ENCODE measurements at regions of chr7 and their contacts with region 1.

Region 1: DNA sequence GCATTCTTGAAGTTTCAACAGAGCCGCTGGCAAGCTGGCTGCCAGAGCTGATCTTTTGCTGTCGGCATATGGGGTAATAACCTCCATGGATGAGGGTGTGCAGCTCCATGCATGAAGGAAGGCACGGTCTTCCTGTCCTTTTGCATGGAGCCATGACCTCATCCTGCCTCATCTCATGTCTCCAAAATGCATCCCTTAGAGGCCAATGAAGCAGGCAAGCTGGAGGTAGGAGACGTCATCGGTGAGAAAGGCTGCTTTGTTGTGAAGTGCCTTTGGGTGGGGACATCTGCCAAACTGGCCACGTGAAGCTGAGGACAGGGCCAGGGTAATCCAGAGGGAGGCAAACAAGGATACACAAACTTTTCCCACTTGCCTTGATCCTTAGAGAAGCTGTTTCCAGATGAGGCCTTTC is 161.5 kb upstream of the TBX20 start:
- DNase-seq: peak; percentile 78 to 88 (median 82)
- ATAC-seq: peak; percentile 81 to 92 (median 84)
- H3K4me3 ChIP-seq: no peak overlapping the region
- H3K27ac ChIP-seq: peak overlapping the region in 8 of 12 donors; percentile 16 to 69 (median 50)
- H3K4me1 ChIP-seq: peaks cover 0 to 55% (median 13%) of the 10 kb centered on the region in 12 donors
- H3K27me3 ChIP-seq: peaks cover 0 to under 1% (median 0%) of the 10 kb centered on the region in 9 donors
- CTCF ChIP-seq: no peak
- POLR2A ChIP-seq: no peak

Region 2: DNA sequence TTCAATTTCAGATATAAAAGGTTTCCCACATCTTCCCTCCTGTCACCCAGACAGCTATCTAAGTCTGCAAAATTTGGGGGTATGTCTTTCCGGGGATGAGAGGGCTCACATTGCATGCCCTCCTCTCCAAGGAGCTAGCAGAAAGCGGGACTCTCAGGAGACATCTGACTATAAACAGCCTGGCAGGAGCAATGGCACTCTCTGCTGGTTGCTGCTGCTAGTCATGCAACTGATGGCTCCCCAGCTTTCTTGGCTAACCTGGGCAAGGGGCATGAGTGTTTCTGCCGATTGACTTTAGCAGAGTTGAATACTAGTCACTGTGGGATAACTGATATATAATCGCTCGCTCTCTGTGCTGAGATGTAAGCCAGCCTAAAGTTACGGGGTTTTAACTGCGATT is 173.5 kb before region 1 on chr7:
- intact Hi-C with region 1: no loop called
- DNase-seq: peak in 1 of 5 donors; percentile 28
- ATAC-seq: peak in 3 of 4 donors; percentile 37 to 66 (median 47)
- H3K4me3 ChIP-seq: peak overlapping the region in 1 of 12 donors; percentile 14
- H3K27ac ChIP-seq: peak overlapping the region in 3 of 12 donors; percentile 6 to 35 (median 14)
- H3K4me1 ChIP-seq: peaks cover 0 to 87% (median 28%) of the 10 kb centered on the region in 12 donors
- H3K27me3 ChIP-seq: peaks cover 0 to 18% (median 2%) of the 10 kb centered on the region in 9 donors
- CTCF ChIP-seq: peak in 8 of 12 donors; percentile 7 to 42 (median 24)
- POLR2A ChIP-seq: no peak

Region 3: GRCh38 chr7:35380739-35381224 is 34.6 kb before region 1 on chr7:
- intact Hi-C with region 1: loop called in 2 of 10 experiments (anchors 5 kb)
- DNase-seq: no peak
- ATAC-seq: no peak
- H3K4me3 ChIP-seq: no peak overlapping the region
- H3K27ac ChIP-seq: no peak overlapping the region
- H3K4me1 ChIP-seq: peaks cover 0 to 12% (median under 1%) of the 10 kb centered on the region in 12 donors
- H3K27me3 ChIP-seq: no peaks in the 10 kb centered on the region
- CTCF ChIP-seq: no peak
- POLR2A ChIP-seq: no peak

Region 4: DNA sequence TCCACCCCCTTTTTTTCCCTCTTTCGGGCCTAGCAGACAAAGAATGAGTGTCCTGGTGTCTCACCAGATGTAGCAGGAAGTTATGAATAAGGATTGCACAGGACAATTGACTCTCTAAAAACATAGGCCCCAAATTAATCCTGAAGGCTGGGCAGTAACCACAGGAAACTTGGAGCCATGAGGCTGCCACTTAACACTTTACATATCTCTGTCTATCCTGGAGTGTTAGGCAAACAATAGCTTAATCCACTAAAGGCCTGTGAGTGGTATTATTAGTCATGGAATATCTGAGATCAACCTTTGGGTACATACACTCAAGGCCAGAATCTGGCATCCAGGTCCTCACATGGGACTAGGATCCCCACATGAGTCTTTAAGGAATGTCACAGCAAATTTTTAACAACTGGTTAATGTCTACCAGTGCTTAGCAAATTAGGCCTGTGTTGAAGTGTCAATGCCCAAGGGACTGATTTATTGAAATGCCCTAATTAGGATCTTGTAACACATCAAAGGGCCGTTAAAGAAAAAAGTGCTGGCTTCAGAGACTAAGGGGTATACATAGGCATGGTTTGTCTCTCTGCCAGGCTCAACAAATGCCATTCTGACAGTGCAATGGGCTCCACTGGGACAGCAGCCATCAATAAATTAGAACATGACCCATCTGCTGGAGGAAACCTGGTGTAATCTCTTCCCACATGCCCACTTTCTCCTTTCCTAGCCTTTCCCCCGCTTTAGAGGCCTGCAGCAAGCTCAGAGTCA is 35.2 kb after region 1 on chr7:
- intact Hi-C with region 1: no loop called
- DNase-seq: no peak
- ATAC-seq: peak in 1 of 4 donors; percentile 28
- H3K4me3 ChIP-seq: no peak overlapping the region
- H3K27ac ChIP-seq: peak overlapping the region in 2 of 12 donors; percentile 12 to 22
- H3K4me1 ChIP-seq: peaks cover 0 to 16% (median 0%) of the 10 kb centered on the region in 12 donors
- H3K27me3 ChIP-seq: peaks cover 0 to 23% (median 0%) of the 10 kb centered on the region in 9 donors
- CTCF ChIP-seq: no peak
- POLR2A ChIP-seq: no peak

Measured in heart left ventricle (tissue), 16 donors.